Astrocyte of the cerebellum (primary cell): ENCODE measurements at regions of chr2 and their contacts with region 1.

Region 1: DNA sequence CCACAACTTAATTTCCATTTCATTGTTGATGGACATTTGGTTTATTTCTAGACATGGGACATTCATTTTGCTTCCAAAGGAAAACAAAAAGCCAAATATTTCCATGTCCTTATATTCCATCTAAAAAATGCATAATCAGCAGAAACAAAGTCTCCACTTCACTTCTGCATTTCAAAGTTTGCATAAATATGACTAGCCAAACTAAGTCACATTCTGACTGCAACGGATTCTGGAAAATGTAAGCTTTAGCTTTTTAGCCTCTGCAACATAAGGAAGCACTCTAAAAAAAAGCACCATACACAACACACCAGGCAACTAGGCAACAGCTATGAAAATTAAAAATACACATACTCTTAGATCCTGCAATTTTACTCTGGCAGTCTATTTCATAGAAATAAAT is 135.3 kb downstream of the ETAA1 start:
- DNase-seq: no peak
- H3K4me3 ChIP-seq: no peak overlapping the region
- CTCF ChIP-seq: no peak

Region 2: DNA sequence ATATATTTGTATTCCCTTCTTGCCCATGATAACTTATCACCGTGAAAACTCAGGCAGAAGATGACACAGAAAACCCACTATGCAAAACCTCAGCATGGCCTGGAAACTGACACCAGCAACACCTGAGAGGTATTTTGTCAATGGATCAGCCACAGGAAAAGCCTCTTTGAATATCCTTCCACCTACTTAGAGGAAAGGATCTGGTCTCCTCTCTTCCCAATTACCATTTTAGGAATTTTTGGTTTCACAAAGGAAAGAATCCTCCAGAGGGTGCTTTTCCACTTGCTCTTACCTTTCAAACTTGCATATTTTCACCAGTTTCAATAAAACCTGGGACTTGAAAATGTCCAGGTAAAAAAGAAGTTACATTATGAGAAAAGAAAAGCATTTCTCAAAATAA is 1117.5 kb before region 1 on chr2:
- in situ Hi-C with region 1: loop called (anchors 10 kb)
- DNase-seq: no peak
- H3K4me3 ChIP-seq: no peak overlapping the region
- CTCF ChIP-seq: no peak